ENCODE measurements at regions of chr2 and their contacts with region 1.

Region 1: DNA sequence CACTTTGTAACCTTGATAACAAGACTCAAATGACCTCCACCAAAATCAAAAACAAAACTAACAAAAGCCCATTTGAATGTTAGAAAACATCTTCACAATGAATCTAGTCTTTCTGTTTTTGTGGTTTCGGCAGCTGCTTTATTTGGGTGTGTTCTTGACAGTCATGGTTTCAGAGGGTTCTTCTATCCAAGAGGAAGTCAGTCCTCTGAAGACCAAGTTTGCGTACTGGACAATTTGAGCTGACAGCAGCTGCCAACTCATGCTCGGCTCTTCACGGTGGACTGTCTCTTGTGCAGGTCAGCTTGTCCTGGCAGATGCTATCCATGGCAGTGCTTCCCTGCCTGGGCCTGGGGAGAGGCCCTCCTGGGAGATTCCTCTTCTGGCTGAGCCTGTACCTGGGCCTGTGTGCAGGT is 91.0 kb downstream of the TMEM17 start:
- DNase-seq: peak; percentile 39

Region 2: GRCh38 chr2:61993444-61994024 is 421.5 kb before region 1 on chr2:
- in situ Hi-C with region 1: loop called (anchors 25 kb)
- DNase-seq: peak; percentile 84

Region 3: GRCh38 chr2:62216616-62217015 is 198.4 kb before region 1 on chr2:
- in situ Hi-C with region 1: loop called (anchors 25 kb)
- DNase-seq: no peak

Region 4: GRCh38 chr2:62856228-62857040 is 441.4 kb after region 1 on chr2:
- in situ Hi-C with region 1: no loop called
- DNase-seq: no peak